Naive thymus-derived CD8-positive, alpha-beta T cell (primary cell): ENCODE measurements at regions of chr19 and their contacts with region 1.

Region 1: DNA sequence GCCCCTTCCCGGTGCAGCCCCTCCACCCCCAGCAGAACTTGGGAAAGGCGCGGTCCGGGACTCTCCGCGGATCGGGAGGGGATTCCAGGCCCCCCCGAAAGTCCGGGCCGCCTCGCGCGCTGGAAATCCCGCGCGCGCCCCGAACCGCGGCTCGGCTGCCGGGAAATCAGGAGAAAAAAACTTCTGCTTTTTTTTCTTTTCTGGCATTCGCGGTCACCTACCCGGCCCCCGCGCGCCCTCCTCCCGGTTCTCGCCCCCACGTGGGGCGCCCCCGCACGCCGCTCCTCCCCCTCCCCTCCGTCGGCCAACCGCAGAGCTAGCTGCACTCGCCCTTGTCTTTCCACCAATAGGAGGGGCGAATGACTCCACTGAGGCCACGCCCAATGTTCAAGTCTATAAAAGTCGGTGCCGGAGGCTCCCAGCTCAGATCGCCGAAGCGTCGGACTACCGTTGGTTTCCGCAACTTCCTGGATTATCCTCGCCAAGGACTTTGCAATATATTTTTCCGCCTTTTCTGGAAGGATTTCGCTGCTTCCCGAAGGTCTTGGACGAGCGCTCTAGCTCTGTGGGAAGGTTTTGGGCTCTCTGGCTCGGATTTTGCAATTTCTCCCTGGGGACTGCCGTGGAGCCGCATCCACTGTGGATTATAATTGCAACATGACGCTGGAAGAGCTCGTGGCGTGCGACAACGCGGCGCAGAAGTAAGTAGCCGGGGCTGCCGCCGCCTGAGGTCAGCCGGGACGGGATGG is at the start of gene GADD45B:
- DNase-seq: peak; percentile 92 to 99 (median 98)
- ATAC-seq: peak; percentile 53 to 62
- H3K4me3 Mint-ChIP-seq: peak within 1 kb of the TSS; percentile 95 to 100 (median 98)
- H3K27ac Mint-ChIP-seq: peak within 1 kb of the TSS; percentile 94 to 99 (median 94)
- H3K4me1 Mint-ChIP-seq: peaks cover 9 to 36% (median 27%) of the 10 kb centered on the region in 4 donors
- H3K27me3 Mint-ChIP-seq: peaks cover 0 to 5% (median 0%) of the 10 kb centered on the region in 5 donors
- polyA plus RNA-seq, gene GADD45B: 41.0 to 57.3 (median 43.8) TPM

Region 2: DNA sequence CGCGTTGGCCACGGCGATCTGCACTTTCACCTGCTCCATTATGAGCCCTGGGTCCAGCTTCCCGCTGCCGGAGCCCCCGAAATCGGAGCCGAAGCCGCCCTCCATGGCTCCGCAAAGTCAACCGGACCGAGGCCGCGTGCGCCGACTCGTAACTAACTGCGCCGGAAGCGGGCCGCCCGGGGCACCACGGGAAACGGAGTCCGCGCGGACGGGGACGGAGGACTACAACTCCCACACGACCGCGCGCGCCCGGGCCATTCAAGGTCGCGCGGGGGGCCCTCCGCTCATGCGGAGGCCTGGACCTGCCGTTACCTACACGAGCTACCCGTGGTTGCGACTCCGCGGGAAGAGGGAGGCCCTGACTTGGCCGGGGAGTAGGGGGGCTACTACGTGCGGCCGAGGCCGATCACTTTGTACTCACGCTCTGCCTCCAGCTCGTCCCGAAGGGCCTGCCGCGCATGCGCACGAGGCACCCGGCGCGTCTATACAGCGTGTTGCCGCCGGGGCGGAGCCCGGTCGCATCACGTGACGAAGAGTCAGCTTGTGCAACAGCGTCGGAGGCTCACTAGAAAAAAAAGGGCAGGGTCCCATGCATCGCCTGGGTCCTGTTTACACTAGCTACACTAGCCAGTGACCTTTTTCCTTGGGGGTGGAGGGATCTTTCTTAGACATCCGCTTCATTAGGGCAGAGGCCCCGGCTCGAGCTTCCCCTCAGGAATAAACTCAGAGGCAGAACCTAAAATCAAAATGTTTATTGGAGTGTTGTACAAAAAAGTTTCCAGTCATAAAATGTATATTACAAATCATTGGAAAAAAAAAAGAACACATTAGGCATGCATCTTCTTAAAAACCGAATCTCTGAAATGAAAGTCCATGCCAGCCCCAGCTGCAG is 48.2 kb before region 1 on chr19 and contains the start of gene TIMM13:
- POLR2A ChIA-PET with region 1: interaction called, 42 read pairs
- DNase-seq: peak; percentile 94 to 100 (median 96)
- ATAC-seq: peak; percentile 92 to 95
- H3K4me3 Mint-ChIP-seq: peak within 1 kb of the TSS; percentile 92 to 98 (median 94)
- H3K27ac Mint-ChIP-seq: peak within 1 kb of the TSS; percentile 95 to 99 (median 97)
- H3K4me1 Mint-ChIP-seq: peaks cover 7 to 21% (median 14%) of the 10 kb centered on the region in 4 donors
- H3K27me3 Mint-ChIP-seq: no peaks in the 10 kb centered on the region
- polyA plus RNA-seq, gene TIMM13: 74.4 to 92.2 (median 83.0) TPM

Region 3: DNA sequence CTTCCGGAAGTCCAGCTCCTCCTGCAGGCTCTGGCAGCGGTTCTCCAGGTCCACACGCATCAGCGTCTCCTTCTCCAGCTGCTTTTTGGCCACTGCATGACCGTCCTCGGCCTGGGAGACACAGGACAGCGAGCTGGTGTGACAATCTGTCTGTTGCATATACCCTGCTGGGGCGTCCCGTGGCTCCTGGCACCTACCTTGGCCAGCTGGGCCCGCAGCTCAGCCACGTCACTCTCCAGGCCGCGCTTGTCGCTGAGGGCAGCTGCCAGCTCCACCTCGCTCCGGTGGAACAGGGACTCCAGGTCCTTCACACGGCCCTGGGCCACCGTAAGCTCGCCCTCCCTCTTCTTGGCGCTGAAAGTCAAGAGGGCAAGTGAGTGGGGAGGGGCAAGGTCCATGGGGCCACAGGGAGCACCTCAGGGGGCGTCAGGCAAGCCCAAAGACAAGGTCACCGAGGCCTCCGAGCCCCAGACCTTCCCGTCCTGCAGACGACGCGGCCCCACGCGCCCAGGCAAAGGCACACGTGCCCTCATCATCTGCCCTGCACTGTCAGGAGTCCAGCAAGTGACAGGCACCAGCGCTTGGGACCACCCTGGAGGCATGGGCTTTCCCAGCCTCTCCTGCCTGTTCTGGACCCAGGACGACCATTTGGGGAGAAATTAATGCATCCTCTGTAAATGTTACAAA is 37.6 kb before region 1 on chr19:
- POLR2A ChIA-PET with region 1: no interaction called
- DNase-seq: no peak
- ATAC-seq: no peak
- H3K4me3 Mint-ChIP-seq: no peak overlapping the region
- H3K27ac Mint-ChIP-seq: no peak overlapping the region
- H3K4me1 Mint-ChIP-seq: peaks cover 0 to 4% (median 0%) of the 10 kb centered on the region in 4 donors
- H3K27me3 Mint-ChIP-seq: no peaks in the 10 kb centered on the region

Region 4: DNA sequence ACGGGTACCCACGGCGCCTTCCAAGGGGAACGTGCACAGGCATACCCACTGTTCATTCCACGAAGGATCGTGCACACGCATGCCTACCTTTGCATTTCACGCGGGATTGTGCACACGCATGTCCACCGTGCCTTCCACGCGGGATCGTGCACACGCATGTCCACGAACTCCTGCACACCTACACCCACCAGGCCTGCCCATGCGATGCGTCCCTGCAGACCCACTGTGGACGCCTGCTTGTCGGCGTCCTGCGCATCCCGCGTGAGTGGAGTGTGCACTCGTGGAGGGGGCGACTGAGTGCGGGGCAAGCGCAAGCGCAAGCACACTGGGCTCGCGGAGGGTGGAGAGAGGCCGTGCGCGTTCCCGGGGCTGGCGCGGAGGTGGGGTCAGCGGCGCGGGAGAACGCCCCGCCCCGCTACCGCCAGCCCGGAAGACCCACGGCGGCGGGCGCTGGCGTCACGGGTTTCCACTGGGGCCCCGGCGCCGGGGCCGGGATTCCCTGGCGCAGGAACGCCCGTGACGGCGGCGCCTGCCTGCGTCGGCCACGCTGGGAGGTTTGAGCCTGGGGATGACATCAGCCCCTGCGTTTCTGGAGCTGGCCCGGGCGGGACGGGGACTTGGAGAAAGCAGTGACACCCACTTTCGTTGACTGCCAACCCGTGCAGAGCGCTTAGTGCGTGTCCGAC is 18.7 kb after region 1 on chr19:
- POLR2A ChIA-PET with region 1: interaction called, 112 read pairs
- DNase-seq: peak; percentile 28 to 77 (median 42)
- ATAC-seq: peak; percentile 75 to 81
- H3K4me3 Mint-ChIP-seq: peak overlapping the region; percentile 57 to 85 (median 80)
- H3K27ac Mint-ChIP-seq: peak overlapping the region in 6 of 10 donors; percentile 48 to 78 (median 68)
- H3K4me1 Mint-ChIP-seq: peaks cover 10 to 44% (median 34%) of the 10 kb centered on the region in 4 donors
- H3K27me3 Mint-ChIP-seq: peaks cover 3 to 42% (median 13%) of the 10 kb centered on the region in 5 donors

Region 5: GRCh38 chr19:2532252-2533071 is 56.6 kb after region 1 on chr19:
- POLR2A ChIA-PET with region 1: interaction called, 30 read pairs
- DNase-seq: no peak
- ATAC-seq: no peak
- H3K4me3 Mint-ChIP-seq: no peak overlapping the region
- H3K27ac Mint-ChIP-seq: peak overlapping the region in 1 of 10 donors; percentile 35
- H3K4me1 Mint-ChIP-seq: peaks cover 10 to 22% (median 18%) of the 10 kb centered on the region in 4 donors
- H3K27me3 Mint-ChIP-seq: no peaks in the 10 kb centered on the region

Region 6: GRCh38 chr19:2561895-2562294 is 86.0 kb after region 1 on chr19:
- POLR2A ChIA-PET with region 1: interaction called, 95 read pairs
- DNase-seq: peak; percentile 42 to 82 (median 66)
- ATAC-seq: peak; percentile 94 to 98
- H3K4me3 Mint-ChIP-seq: peak overlapping the region; percentile 92 to 97 (median 96)
- H3K27ac Mint-ChIP-seq: peak overlapping the region; percentile 95 to 99 (median 98)
- H3K4me1 Mint-ChIP-seq: peaks cover 5 to 24% (median 19%) of the 10 kb centered on the region in 4 donors
- H3K27me3 Mint-ChIP-seq: no peaks in the 10 kb centered on the region

Region 7: GRCh38 chr19:2610637-2611482 is 135.0 kb after region 1 on chr19:
- POLR2A ChIA-PET with region 1: interaction called, 346 read pairs
- DNase-seq: peak; percentile 73 to 92 (median 86)
- ATAC-seq: peak; percentile 57 to 72
- H3K4me3 Mint-ChIP-seq: peak overlapping the region; percentile 79 to 90 (median 88)
- H3K27ac Mint-ChIP-seq: peak overlapping the region in 8 of 10 donors; percentile 57 to 92 (median 84)
- H3K4me1 Mint-ChIP-seq: peaks cover 13 to 63% (median 39%) of the 10 kb centered on the region in 4 donors
- H3K27me3 Mint-ChIP-seq: no peaks in the 10 kb centered on the region